Activated CD4-positive, alpha-beta memory T cell treated with anti-CD3 and anti-CD28 coated beads, Interleukin-2, amount 10 ng/mL, durations not matched to agents 7 days and 5 days (primary cell): ENCODE measurements at regions of chr11 and their contacts with region 1.

Region 1: GRCh38 chr11:1572197-1573076 is at the start of gene DUSP8:
- DNase-seq: peak; percentile 92
- H3K4me3 Mint-ChIP-seq: peak within 1 kb of the TSS; percentile 30
- H3K27ac Mint-ChIP-seq: no peak within 1 kb of the TSS
- H3K4me1 Mint-ChIP-seq: peaks cover 11% of the 10 kb centered on the region
- H3K27me3 Mint-ChIP-seq: peaks cover 35% of the 10 kb centered on the region
- total RNA-seq, gene DUSP8: 2.6 to 2.7 TPM

Region 2: DNA sequence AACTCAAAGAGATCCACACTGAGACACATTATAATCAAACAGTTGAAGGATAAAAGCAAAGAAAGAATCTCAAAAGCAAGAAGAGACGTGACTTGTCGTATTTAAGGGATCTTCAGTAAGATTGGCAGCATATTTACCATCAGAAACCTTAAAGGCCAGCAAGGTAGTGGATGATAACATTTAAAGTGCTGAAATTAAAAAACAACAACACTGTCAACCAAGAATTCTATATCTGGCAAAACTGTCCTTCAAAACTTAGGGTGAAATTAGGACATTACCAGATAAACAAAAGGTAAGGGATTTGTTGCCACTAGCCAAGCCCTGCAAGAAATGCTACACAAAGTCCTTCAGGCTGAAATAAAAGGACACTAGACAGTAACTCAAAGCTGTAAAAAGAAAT is 360.6 kb before region 1 on chr11:
- CTCF ChIA-PET with region 1: no interaction called
- POLR2A ChIA-PET with region 1: no interaction called
- DNase-seq: no peak
- H3K4me3 Mint-ChIP-seq: no peak overlapping the region
- H3K27ac Mint-ChIP-seq: no peak overlapping the region
- H3K4me1 Mint-ChIP-seq: no peaks in the 10 kb centered on the region
- H3K27me3 Mint-ChIP-seq: peaks cover 14% of the 10 kb centered on the region

Region 3: DNA sequence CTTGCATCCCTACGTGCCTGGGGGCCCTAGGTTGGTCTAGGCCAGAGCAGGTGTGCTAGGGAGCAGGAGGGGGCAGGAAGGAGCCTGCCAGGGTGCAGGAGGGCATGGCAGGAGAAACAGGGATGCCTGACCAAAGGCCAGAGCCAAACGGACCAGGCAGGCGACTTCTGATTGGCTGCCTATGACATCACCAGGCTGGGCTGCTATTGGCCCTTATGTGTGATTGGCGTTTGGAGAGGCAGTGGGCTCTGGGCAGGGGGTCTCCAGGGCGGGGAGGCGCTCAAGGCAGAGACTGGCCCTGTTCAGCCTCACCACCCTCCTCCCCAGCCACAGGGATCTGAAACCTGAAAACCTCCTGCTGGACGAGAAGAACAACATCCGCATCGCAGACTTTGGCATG is 130.3 kb before region 1 on chr11:
- CTCF ChIA-PET with region 1: no interaction called
- POLR2A ChIA-PET with region 1: no interaction called
- DNase-seq: no peak
- H3K4me3 Mint-ChIP-seq: no peak overlapping the region
- H3K27ac Mint-ChIP-seq: no peak overlapping the region
- H3K4me1 Mint-ChIP-seq: no peaks in the 10 kb centered on the region
- H3K27me3 Mint-ChIP-seq: no peaks in the 10 kb centered on the region

Region 4: DNA sequence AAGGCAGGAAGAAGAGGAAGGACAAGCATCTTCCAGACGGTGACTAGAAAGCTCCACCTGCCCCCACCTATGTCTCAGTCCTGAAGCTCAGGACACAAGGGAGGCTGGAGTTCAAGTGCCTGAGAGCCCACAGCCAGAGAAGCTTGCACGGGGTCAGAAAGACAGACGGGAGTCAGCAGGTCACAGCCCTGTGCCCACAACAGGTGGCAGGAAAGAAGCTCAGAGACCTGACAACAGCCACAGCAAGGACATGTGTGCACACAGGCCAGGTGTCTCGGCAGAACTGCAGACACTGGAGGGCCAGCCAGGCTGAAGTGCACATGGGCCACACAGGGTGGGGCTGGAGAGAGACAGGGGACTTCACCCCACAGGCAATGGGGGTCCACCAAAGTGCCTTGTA is 48.7 kb before region 1 on chr11:
- CTCF ChIA-PET with region 1: no interaction called
- POLR2A ChIA-PET with region 1: no interaction called
- DNase-seq: no peak
- H3K4me3 Mint-ChIP-seq: no peak overlapping the region
- H3K27ac Mint-ChIP-seq: no peak overlapping the region
- H3K4me1 Mint-ChIP-seq: no peaks in the 10 kb centered on the region
- H3K27me3 Mint-ChIP-seq: no peaks in the 10 kb centered on the region

Region 5: GRCh38 chr11:1546536-1547400 is 25.7 kb before region 1 on chr11:
- CTCF ChIA-PET with region 1: interaction called, 44 read pairs
- POLR2A ChIA-PET with region 1: interaction called, 6 read pairs
- DNase-seq: peak; percentile 35
- H3K4me3 Mint-ChIP-seq: no peak overlapping the region
- H3K27ac Mint-ChIP-seq: no peak overlapping the region
- H3K4me1 Mint-ChIP-seq: peaks cover 3% of the 10 kb centered on the region
- H3K27me3 Mint-ChIP-seq: peaks cover 34% of the 10 kb centered on the region

Region 6: DNA sequence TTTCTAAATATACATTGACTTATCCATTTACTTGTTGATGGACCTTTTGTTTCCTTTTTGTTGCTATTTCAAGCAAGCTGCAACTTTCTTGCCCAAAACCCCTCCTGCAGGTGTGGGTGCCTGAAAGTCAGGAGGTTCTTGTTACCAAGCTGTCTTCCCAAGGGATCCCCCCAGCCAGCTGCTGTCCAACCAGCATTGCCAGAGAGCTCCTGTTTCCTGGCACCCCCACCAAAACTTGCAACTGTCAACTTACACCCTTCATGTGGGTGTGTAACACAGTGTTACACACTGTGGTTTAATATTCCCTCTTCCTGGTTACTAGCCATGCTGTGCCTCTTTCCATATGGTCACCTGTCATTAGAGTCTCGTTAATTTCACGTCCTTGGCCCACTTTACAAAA is 14.3 kb after region 1 on chr11:
- CTCF ChIA-PET with region 1: interaction called, 68 read pairs
- POLR2A ChIA-PET with region 1: interaction called, 12 read pairs
- DNase-seq: no peak
- H3K4me3 Mint-ChIP-seq: no peak overlapping the region
- H3K27ac Mint-ChIP-seq: no peak overlapping the region
- H3K4me1 Mint-ChIP-seq: peaks cover 27% of the 10 kb centered on the region
- H3K27me3 Mint-ChIP-seq: peaks cover 3% of the 10 kb centered on the region